ENCODE measurements at regions of chr7 and their contacts with region 1.

Region 1: DNA sequence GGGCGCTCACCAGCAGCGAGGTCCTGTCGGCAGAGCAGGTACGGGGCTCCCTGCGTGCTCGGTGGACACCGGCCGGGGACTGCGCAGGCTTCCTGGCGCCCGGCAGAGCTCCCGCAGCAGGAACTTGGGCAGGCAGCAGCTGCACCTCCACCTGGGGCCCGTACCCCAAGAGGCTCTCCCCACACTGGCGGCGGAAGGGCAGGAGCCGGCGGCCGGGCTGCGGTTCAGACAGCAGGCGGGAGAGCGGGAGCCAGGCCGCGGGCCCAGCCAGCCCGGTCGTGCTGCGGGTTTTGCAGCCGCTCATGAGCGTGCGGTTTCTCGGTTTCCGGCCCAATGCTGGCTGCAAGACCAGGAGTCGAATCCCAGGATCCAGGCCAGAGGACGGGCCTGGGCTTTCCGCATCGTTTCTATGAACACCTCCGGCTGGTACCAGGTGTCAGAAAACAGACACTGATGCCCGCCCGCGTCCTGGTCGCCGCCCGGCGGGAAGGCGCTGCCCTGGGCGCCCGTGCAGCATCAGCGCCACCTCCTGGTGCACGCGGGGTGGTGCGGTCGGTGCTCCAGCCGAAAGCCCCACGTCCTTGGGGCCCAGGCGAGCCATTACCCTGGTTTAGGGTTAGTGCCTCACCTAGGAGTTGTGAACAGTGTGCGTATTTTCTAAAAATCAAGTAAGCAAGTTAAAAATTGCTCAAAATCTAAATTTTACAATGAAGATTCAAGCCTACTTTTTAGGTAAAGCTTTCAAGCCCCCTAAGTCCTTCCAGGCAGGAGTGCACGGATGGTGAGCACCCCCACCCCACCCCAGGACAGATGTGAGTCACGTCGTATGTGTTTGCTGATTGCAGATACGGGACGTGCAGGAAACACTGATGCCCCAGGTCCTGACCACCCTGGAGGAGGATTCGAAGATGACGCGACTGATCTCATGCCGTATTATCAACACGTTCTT is 47.4 kb upstream of the PRKAR1B start:
- DNase-seq: peak; percentile 69
- ATAC-seq: peak; percentile 99
- H3K4me3 Mint-ChIP-seq: no peak overlapping the region
- H3K27ac Mint-ChIP-seq: no peak overlapping the region
- H3K4me1 Mint-ChIP-seq: no peaks in the 10 kb centered on the region
- H3K27me3 Mint-ChIP-seq: no peaks in the 10 kb centered on the region
- CTCF ChIP-seq: peak; percentile 99

Region 2: GRCh38 chr7:322111-322671 is 452.2 kb before region 1 on chr7:
- CTCF ChIA-PET with region 1: interaction called, 11 read pairs
- POLR2A ChIA-PET with region 1: interaction called, 3 read pairs
- intact Hi-C with region 1: loop called (anchors 5 kb)
- DNase-seq: peak; percentile 81
- ATAC-seq: peak; percentile 100
- H3K4me3 Mint-ChIP-seq: no peak overlapping the region
- H3K27ac Mint-ChIP-seq: no peak overlapping the region
- H3K4me1 Mint-ChIP-seq: no peaks in the 10 kb centered on the region
- H3K27me3 Mint-ChIP-seq: peaks cover 16% of the 10 kb centered on the region
- CTCF ChIP-seq: peak; percentile 91

Region 3: DNA sequence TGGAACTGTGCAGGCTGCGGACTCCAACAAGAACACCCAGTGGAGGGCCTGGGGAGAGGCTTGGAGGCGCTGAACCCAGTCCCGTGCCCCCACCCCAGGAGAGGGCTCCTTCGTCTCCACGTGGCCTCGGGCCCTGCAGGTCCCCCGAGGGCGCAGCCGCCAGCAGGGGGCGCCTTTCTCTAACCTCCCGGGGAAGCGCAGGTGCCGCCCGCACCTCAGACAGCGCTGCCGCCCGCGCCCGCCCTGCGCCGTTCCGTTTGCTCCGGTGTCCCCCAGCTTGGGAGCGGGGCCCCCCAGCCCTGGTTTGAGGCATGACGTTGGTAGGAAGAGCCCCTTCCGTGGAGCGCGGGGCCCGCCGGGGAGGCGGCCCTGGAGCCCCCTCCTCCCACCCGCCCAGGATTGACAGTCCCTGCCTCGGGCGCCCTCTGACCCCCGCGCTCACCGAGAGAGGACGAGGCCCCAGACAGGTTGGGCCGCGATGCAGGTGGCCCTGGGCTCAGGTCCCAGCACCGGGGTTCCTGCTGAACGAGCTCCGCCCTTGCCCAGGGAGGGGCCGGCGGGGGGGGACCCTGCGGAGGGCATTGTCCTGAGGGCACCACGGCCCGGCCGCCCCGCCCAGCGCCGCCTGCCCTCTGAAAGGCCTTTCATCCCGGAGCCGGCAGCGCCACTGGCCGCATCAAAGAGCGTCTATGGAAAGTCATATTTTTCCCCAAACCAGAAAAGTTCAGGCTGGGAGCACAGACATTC is 441.6 kb before region 1 on chr7:
- CTCF ChIA-PET with region 1: interaction called, 10 read pairs
- POLR2A ChIA-PET with region 1: no interaction called
- intact Hi-C with region 1: no loop called
- DNase-seq: peak; percentile 94
- ATAC-seq: peak; percentile 96
- H3K4me3 Mint-ChIP-seq: no peak overlapping the region
- H3K27ac Mint-ChIP-seq: no peak overlapping the region
- H3K4me1 Mint-ChIP-seq: peaks cover 12% of the 10 kb centered on the region
- H3K27me3 Mint-ChIP-seq: no peaks in the 10 kb centered on the region
- CTCF ChIP-seq: peak; percentile 93

Region 4: GRCh38 chr7:726084-726853 is 48.2 kb before region 1 on chr7 and contains the start of gene DNAAF5:
- CTCF ChIA-PET with region 1: no interaction called
- POLR2A ChIA-PET with region 1: no interaction called
- intact Hi-C with region 1: no loop called
- DNase-seq: peak; percentile 91
- ATAC-seq: peak; percentile 90
- H3K4me3 Mint-ChIP-seq: peak within 1 kb of the TSS; percentile 87
- H3K27ac Mint-ChIP-seq: peak within 1 kb of the TSS; percentile 82
- H3K4me1 Mint-ChIP-seq: peaks cover 36% of the 10 kb centered on the region
- H3K27me3 Mint-ChIP-seq: no peaks in the 10 kb centered on the region
- CTCF ChIP-seq: no peak
- total RNA-seq, gene DNAAF5: 36.4 to 36.8 TPM

Region 5: GRCh38 chr7:750111-750905 is 24.1 kb before region 1 on chr7:
- CTCF ChIA-PET with region 1: no interaction called
- POLR2A ChIA-PET with region 1: no interaction called
- intact Hi-C with region 1: no loop called
- DNase-seq: no peak
- ATAC-seq: no peak
- H3K4me3 Mint-ChIP-seq: no peak overlapping the region
- H3K27ac Mint-ChIP-seq: no peak overlapping the region
- H3K4me1 Mint-ChIP-seq: peaks cover 2% of the 10 kb centered on the region
- H3K27me3 Mint-ChIP-seq: no peaks in the 10 kb centered on the region
- CTCF ChIP-seq: no peak

Region 6: DNA sequence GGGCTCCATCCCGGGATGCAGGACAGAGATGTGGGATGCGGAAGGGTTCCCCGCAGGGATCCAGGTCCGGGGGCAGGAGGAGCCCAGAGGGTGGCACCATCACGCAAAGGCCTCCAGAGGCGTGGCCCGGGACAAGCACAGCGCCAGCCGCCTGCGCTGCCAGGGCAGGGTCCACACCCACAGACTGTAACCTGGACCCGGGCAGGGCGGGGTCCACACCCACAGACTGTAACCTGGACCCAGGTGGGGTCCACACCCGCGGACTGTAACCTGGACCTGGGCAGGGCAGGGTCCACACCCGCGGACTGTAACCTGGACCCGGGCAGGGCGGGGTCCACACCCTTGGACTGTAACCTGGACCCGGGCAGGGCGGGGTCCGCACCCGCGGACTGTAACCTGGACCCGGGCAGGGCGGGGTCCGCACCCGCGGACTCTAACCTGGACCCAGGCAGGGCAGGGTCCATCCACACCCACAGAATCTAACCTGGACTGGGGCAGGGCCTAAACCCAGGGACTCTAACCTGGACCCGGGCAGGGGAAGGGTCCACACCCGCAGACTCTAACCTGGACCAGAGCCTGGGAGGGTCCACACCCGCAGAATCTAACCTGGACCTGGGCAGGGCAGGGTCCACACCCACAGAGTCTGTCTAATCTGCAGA is 20.4 kb after region 1 on chr7:
- CTCF ChIA-PET with region 1: no interaction called
- POLR2A ChIA-PET with region 1: no interaction called
- intact Hi-C with region 1: no loop called
- DNase-seq: no peak
- ATAC-seq: no peak
- H3K4me3 Mint-ChIP-seq: no peak overlapping the region
- H3K27ac Mint-ChIP-seq: no peak overlapping the region
- H3K4me1 Mint-ChIP-seq: no peaks in the 10 kb centered on the region
- H3K27me3 Mint-ChIP-seq: no peaks in the 10 kb centered on the region
- CTCF ChIP-seq: no peak